Mammary epithelial cell (primary cell): ENCODE measurements at regions of chr12 and their contacts with region 1.

Region 1: DNA sequence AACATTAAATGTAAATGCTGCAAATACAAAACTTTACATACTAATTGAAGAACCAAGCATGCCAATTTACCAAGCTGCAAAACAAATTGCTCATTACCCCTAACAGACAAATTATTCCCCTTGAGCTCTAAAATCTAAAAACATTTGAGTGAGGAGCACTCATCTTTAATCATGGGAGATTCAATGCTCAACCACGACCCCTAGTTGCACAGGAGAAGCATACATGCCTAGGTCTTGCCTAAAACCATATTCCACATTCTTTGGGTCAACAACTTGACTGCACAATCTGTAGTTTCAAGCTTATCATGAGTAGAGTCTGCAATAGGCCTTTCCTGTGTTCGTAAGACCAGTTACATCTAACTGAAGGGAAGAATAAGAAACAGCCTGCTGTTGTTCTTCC is 69.7 kb downstream of the MGAT4C start:
- DNase-seq: peak; percentile 2
- H3K4me3 ChIP-seq: no peak overlapping the region
- H3K27ac ChIP-seq: no peak overlapping the region
- H3K4me1 ChIP-seq: no peaks in the 10 kb centered on the region
- H3K27me3 ChIP-seq: no peaks in the 10 kb centered on the region
- CTCF ChIP-seq: peak; percentile 43 to 64

Region 2: GRCh38 chr12:85951823-85952222 is 234.6 kb before region 1 on chr12:
- CTCF ChIA-PET with region 1: no interaction called
- dilution Hi-C with region 1: no loop called
- in situ Hi-C with region 1: no loop called
- intact Hi-C with region 1: loop called (anchors 5 kb)
- DNase-seq: peak; percentile 1
- H3K4me3 ChIP-seq: no peak overlapping the region
- H3K27ac ChIP-seq: no peak overlapping the region
- H3K4me1 ChIP-seq: no peaks in the 10 kb centered on the region
- H3K27me3 ChIP-seq: no peaks in the 10 kb centered on the region
- CTCF ChIP-seq: peak; percentile 45 to 49